ENCODE measurements at regions of chr18 and their contacts with region 1.

Region 1: GRCh38 chr18:2589345-2590068 is 18.1 kb downstream of the NDC80 start:
- DNase-seq: peak in 4 of 14 experiments; percentile 7 to 54 (median 50)
- ATAC-seq: peak; percentile 86
- H3K4me3 ChIP-seq: peak overlapping the region; percentile 41
- H3K4me3 Mint-ChIP-seq: peak overlapping the region; percentile 78
- H3K27ac ChIP-seq: peak overlapping the region; percentile 47 to 84
- H3K27ac Mint-ChIP-seq: peak overlapping the region; percentile 89
- H3K4me1 ChIP-seq: peaks cover 15% of the 10 kb centered on the region
- H3K4me1 Mint-ChIP-seq: peaks cover 52% of the 10 kb centered on the region
- H3K27me3 ChIP-seq: no peaks in the 10 kb centered on the region
- H3K27me3 Mint-ChIP-seq: no peaks in the 10 kb centered on the region
- CTCF ChIP-seq: no peak

Region 2: DNA sequence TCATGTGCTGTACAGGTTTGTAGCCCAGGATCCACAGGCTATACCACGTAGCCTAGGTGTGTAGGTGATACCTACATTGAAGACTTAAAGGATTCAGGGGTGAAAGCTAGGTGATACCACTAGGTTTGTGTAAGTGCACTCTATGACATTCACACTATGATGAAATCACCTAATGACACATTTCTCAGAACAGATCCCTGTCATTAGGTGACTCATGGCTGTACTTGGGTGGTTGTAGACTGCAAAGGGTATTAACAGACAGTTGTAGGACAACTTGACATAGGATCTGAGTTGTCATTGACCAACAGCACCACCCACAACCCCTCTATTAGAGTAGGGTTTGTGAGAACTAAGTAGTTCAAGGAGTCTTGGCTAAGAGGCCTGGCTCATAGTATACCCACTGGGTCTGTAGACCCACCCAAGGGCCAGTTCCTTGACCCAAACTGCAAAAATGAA is 38.3 kb after region 1 on chr18:
- CTCF ChIA-PET with region 1: no interaction called
- POLR2A ChIA-PET with region 1: no interaction called
- intact Hi-C with region 1: loop called in 1 of 2 experiments (anchors 5 kb)
- DNase-seq: peak in 1 of 14 experiments; percentile 45
- ATAC-seq: peak; percentile 37
- H3K4me3 ChIP-seq: no peak overlapping the region
- H3K4me3 Mint-ChIP-seq: no peak overlapping the region
- H3K27ac ChIP-seq: no peak overlapping the region
- H3K27ac Mint-ChIP-seq: no peak overlapping the region
- H3K4me1 ChIP-seq: peaks cover 2% of the 10 kb centered on the region
- H3K4me1 Mint-ChIP-seq: peaks cover 27% of the 10 kb centered on the region
- H3K27me3 ChIP-seq: no peaks in the 10 kb centered on the region
- H3K27me3 Mint-ChIP-seq: no peaks in the 10 kb centered on the region
- CTCF ChIP-seq: no peak

Measured in CD4-positive, alpha-beta T cell (primary cell).